Transverse colon (tissue), 4 donors: ENCODE measurements at regions of chr2 and their contacts with region 1.

Region 1: GRCh38 chr2:37672104-37672869 is 845 bp upstream of the CDC42EP3 start:
- DNase-seq: peak; percentile 83
- H3K4me3 ChIP-seq: peak overlapping the region; percentile 68 to 84 (median 81)
- H3K27ac ChIP-seq: peak overlapping the region; percentile 93 to 96 (median 94)
- H3K4me1 ChIP-seq: peaks cover 0 to 42% (median 13%) of the 10 kb centered on the region in 4 donors
- H3K27me3 ChIP-seq: no peaks in the 10 kb centered on the region
- CTCF ChIP-seq: no peak
- EP300 ChIP-seq: no peak
- POLR2A ChIP-seq: no peak

Region 2: DNA sequence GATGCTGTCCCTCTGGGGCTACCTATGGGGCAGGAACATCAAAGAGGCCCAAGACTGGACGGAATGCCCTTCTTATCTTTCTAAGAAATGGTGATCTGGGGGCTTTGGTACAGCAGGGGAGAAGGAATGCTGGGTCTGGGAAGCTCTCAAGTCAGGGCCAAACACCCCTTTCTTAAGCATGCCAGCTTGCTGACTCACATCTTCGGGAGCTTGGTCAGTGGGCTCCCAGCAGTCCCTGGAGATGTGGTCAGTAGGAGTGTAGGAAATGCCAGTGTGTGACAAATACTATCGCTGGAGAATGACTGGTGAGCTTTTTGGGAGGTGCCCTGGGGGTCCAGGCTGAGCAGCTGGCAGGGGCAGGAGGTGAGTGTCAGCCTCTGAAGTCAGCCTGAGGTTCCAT is 104.2 kb after region 1 on chr2:
- in situ Hi-C with region 1: no loop called
- intact Hi-C with region 1: loop called (anchors 5 kb)
- DNase-seq: no peak
- H3K4me3 ChIP-seq: no peak overlapping the region
- H3K27ac ChIP-seq: peak overlapping the region; percentile 9 to 82 (median 71)
- H3K4me1 ChIP-seq: peaks cover 3 to 49% (median 31%) of the 10 kb centered on the region in 4 donors
- H3K27me3 ChIP-seq: no peaks in the 10 kb centered on the region
- CTCF ChIP-seq: no peak
- EP300 ChIP-seq: no peak
- POLR2A ChIP-seq: no peak